Activated CD8-positive, alpha-beta T cell treated with anti-CD3 and anti-CD28 coated beads, Interleukin-2, amount 10 ng/mL, durations not matched to agents 7 days and 5 days (primary cell): ENCODE measurements at regions of chr17 and their contacts with region 1.

Region 1: GRCh38 chr17:17496189-17497064 is at the start of gene RASD1:
- DNase-seq: peak; percentile 84
- ATAC-seq: peak; percentile 87
- H3K4me3 Mint-ChIP-seq: peak within 1 kb of the TSS; percentile 69
- H3K27ac Mint-ChIP-seq: no peak within 1 kb of the TSS
- H3K4me1 Mint-ChIP-seq: peaks cover 18% of the 10 kb centered on the region
- H3K27me3 Mint-ChIP-seq: peaks cover 19% of the 10 kb centered on the region
- total RNA-seq, gene RASD1: 0.39 to 0.58 TPM

Region 2: GRCh38 chr17:17356149-17356930 is 140.1 kb before region 1 on chr17:
- CTCF ChIA-PET with region 1: interaction called, 26 read pairs
- POLR2A ChIA-PET with region 1: no interaction called
- DNase-seq: peak; percentile 78
- ATAC-seq: peak; percentile 79
- H3K4me3 Mint-ChIP-seq: no peak overlapping the region
- H3K27ac Mint-ChIP-seq: no peak overlapping the region
- H3K4me1 Mint-ChIP-seq: peaks cover 8% of the 10 kb centered on the region
- H3K27me3 Mint-ChIP-seq: peaks cover 16% of the 10 kb centered on the region

Region 3: DNA sequence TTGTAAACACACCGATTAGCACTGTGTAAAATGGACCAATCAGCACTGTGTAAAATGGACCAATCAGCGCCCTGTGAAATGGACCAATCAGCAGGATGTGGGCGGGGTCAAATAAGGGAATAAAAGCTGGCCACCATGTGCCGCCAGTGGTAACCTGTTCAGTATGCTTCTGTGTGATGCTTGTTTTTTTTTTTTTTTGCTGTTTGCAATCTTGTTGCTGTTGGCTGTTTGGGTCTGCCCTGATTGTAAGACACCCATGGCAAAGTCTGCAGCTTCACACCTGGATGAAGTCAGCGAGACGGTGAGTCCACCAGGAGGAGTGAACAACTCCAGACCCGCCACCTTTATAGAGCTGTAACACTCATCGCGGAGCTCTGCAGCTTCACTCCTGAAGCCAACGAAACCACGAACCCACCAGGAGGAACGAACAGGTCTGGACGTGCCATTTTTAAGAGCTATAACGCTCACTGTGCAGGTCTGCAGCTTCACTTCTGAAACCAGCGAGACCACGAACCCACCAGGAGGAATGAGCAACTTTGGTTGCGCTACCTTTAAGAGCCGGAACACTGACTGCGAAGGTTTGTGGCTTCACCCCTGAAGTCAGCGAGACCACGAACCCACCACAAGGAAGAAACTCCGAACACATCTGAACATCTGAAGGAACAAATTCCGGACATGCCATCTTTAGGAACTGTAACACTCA is 104.6 kb before region 1 on chr17:
- CTCF ChIA-PET with region 1: interaction called, 12 read pairs
- POLR2A ChIA-PET with region 1: no interaction called
- DNase-seq: peak; percentile 77
- ATAC-seq: peak; percentile 77
- H3K4me3 Mint-ChIP-seq: peak overlapping the region; percentile 66
- H3K27ac Mint-ChIP-seq: peak overlapping the region; percentile 76
- H3K4me1 Mint-ChIP-seq: peaks cover 24% of the 10 kb centered on the region
- H3K27me3 Mint-ChIP-seq: peaks cover 33% of the 10 kb centered on the region

Region 4: DNA sequence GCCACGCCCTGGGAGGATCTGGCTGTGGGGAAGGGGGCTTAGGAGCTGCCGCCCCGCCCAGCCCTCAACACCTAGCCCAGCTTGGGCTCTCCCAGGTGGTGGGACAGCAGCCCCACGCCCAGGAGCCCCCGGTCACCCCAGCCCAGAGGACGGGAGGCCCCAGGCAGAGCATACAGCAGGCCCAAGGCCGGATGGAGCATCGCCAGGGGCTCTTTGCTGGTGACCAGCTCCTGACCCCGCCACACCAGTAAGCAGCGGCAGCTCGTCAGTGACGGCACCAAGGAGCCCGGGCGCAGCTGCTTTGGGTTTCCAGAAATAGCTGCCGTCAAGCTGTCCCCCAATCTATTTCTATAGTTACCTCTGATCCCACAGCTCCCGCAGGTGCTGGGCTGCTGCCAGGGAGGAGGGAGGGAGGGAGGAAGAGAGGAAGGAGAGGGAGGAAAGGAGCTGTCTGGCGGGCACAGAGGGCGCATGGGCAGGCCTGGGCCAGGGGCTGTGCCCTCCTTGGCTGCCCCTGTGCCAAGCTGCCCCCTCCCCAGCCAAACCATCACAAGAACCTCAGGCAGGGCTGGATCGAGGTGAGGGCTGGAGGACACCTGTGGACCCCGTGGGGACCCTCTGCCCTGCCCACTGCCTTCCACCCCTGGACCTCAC is 10.5 kb after region 1 on chr17:
- CTCF ChIA-PET with region 1: interaction called, 23 read pairs
- POLR2A ChIA-PET with region 1: no interaction called
- DNase-seq: no peak
- ATAC-seq: no peak
- H3K4me3 Mint-ChIP-seq: no peak overlapping the region
- H3K27ac Mint-ChIP-seq: no peak overlapping the region
- H3K4me1 Mint-ChIP-seq: peaks cover 15% of the 10 kb centered on the region
- H3K27me3 Mint-ChIP-seq: no peaks in the 10 kb centered on the region

Region 5: DNA sequence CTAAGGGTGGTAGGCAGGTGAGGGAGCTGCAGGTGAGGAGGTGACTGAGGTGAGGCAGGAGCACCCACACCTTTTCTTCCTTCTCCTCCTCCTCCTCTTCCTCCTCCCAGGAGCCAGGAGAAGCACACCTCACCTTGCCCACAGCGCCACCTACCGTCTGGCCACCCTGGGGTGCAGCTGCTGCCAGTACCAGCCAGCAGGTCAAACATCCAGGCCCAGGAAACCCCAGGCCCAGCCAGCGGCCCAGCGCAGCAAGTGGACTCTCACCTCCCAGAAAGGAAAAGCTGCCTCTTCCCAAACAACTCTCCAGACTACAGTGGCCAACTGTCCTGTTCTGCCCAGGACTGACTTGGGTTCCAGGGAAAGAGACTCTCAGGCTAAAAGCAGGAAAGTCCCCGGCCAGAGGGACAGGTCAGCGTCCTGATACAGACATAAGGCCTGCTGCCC is 72.3 kb after region 1 on chr17:
- CTCF ChIA-PET with region 1: interaction called, 29 read pairs
- POLR2A ChIA-PET with region 1: no interaction called
- DNase-seq: peak; percentile 73
- ATAC-seq: peak; percentile 57
- H3K4me3 Mint-ChIP-seq: no peak overlapping the region
- H3K27ac Mint-ChIP-seq: no peak overlapping the region
- H3K4me1 Mint-ChIP-seq: no peaks in the 10 kb centered on the region
- H3K27me3 Mint-ChIP-seq: no peaks in the 10 kb centered on the region

Region 6: GRCh38 chr17:17613708-17614114 is 117.3 kb after region 1 on chr17:
- CTCF ChIA-PET with region 1: interaction called, 19 read pairs
- POLR2A ChIA-PET with region 1: no interaction called
- DNase-seq: peak; percentile 71
- ATAC-seq: peak; percentile 96
- H3K4me3 Mint-ChIP-seq: no peak overlapping the region
- H3K27ac Mint-ChIP-seq: no peak overlapping the region
- H3K4me1 Mint-ChIP-seq: no peaks in the 10 kb centered on the region
- H3K27me3 Mint-ChIP-seq: no peaks in the 10 kb centered on the region